ENCODE measurements at regions of chr17 and their contacts with region 1.

Region 1: DNA sequence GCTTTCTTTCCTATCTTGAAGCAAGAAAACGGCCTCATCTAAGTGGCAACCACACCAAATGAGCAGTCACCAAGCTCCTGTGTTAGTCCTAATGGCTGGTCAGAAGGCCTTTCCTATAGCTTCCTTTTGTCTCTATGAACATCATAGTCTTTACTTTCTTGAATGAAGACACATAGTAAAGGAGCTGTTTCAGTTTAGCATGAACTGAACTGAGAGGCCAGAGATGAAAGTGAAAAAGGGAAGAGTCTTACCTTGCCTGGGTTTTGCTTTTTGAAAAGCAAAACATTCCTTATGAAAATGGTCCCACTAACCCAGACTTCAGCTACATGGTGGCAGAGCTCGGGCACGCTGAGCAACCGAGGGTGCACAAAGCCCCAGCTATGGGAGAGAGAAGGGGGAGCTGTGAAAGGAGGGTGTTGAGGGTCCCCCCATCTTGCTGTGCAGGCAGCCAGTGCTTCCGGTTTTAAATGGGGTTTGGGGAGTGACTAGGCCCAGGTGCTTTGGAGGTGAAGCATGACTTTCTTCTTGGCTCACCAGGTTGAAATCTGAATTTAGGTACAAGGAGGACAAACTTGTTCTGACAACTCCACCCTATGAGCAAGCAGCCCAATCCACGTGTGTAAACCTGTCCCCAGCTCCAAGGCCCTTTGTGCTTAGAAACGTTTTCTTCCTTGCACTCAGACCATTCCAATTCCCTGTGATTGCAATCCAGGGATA is 9.1 kb upstream of the PSMC3IP start:
- DNase-seq: peak; percentile 92
- H3K4me3 ChIP-seq: peak overlapping the region in 1 of 3 experiments; percentile 3
- H3K27ac ChIP-seq: peak overlapping the region; percentile 65
- H3K4me1 ChIP-seq: peaks cover 36% of the 10 kb centered on the region
- H3K27me3 ChIP-seq: no peaks in the 10 kb centered on the region
- CTCF ChIP-seq: no peak

Region 2: DNA sequence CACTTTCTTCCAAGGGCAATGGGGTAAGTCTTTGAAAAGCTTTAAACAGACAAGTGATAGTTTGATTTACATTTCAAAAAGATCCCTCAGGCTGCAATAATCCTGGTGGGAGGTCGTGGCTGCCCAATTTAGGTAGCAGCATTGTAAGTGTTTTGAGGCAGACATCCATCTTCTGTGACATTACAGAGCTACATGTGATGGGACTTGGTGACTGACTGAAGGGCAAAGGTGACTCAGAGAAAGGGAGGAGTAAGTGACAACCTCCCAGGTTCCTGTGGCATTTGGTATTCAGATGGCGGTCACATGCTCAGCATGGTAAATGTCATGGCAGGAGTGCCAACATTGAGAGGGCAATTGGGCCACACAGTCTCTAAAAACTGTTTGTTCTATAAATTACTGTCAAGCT is 224.9 kb before region 1 on chr17:
- CTCF ChIA-PET with region 1: no interaction called
- dilution Hi-C with region 1: no loop called
- in situ Hi-C with region 1: no loop called
- intact Hi-C with region 1: no loop called
- DNase-seq: no peak
- H3K4me3 ChIP-seq: no peak overlapping the region
- H3K27ac ChIP-seq: no peak overlapping the region
- H3K4me1 ChIP-seq: peaks cover 10% of the 10 kb centered on the region
- H3K27me3 ChIP-seq: no peaks in the 10 kb centered on the region
- CTCF ChIP-seq: no peak

Region 3: GRCh38 chr17:42414704-42415409 is 171.8 kb before region 1 on chr17:
- CTCF ChIA-PET with region 1: interaction called, 12 read pairs
- dilution Hi-C with region 1: no loop called
- in situ Hi-C with region 1: no loop called
- intact Hi-C with region 1: no loop called
- DNase-seq: no peak
- H3K4me3 ChIP-seq: peak overlapping the region in 2 of 3 experiments; percentile 9 to 16
- H3K27ac ChIP-seq: no peak overlapping the region
- H3K4me1 ChIP-seq: peaks cover 52% of the 10 kb centered on the region
- H3K27me3 ChIP-seq: no peaks in the 10 kb centered on the region
- CTCF ChIP-seq: no peak

Region 4: GRCh38 chr17:42609182-42609813 is 22.6 kb after region 1 on chr17 and contains the starts of genes RETREG3 and TUBG1:
- CTCF ChIA-PET with region 1: no interaction called
- dilution Hi-C with region 1: no loop called
- in situ Hi-C with region 1: no loop called
- intact Hi-C with region 1: loop called (anchors 1 kb)
- DNase-seq: peak; percentile 100
- H3K4me3 ChIP-seq: peak within 1 kb of the TSS; percentile 68 to 91 (median 79)
- H3K27ac ChIP-seq: peak within 1 kb of the TSS; percentile 59
- H3K4me1 ChIP-seq: peaks cover 10% of the 10 kb centered on the region
- H3K27me3 ChIP-seq: no peaks in the 10 kb centered on the region
- CTCF ChIP-seq: peak; percentile 17 to 56
- total RNA-seq, gene RETREG3: 60.4 to 97.7 TPM
- total RNA-seq, gene TUBG1: 43.0 to 133 TPM